Naive thymus-derived CD8-positive, alpha-beta T cell (primary cell): ENCODE measurements at regions of chr3 and their contacts with region 1.

Region 1: DNA sequence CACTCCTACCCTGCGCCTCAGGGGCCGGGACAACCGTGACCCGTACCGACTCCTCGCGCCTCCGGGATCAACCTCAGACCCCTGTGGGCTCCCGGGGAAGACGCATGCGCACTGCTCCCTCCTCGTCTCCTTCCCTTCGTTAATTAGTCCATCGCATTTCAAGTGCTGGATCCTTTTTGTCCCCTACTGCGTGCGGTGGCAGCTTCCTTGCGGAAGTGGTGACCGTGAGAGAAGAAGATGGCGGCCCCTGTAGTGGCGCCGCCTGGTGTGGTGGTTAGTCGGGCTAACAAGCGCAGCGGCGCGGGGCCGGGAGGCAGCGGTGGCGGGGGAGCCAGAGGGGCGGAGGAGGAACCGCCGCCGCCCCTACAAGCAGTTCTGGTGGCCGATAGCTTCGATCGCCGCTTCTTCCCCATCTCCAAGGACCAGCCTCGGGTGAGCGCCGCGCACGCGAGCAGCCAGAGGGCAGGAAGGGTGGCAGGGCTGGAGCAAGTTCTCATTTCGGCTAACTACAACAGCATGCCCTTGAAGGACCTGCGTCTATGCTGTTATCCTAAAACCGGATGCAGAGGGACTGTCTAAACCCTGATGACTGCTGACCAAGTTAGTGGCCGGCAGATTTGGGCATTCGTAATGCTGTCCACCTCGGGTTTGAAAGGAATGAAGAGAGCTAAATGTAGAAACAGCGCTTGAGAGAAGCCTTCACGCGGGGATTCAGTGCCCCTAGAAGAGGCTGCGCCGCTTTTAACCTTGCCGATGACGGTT is at the start of gene EIF2B5:
- DNase-seq: peak; percentile 67 to 91 (median 84)
- ATAC-seq: peak; percentile 90 to 92
- H3K4me3 Mint-ChIP-seq: peak within 1 kb of the TSS; percentile 88 to 100 (median 96)
- H3K27ac Mint-ChIP-seq: peak within 1 kb of the TSS; percentile 91 to 99 (median 97)
- H3K4me1 Mint-ChIP-seq: peaks cover 26 to 49% (median 32%) of the 10 kb centered on the region in 4 donors
- H3K27me3 Mint-ChIP-seq: no peaks in the 10 kb centered on the region
- polyA plus RNA-seq, gene EIF2B5: 45.8 to 66.6 (median 54.5) TPM

Region 2: GRCh38 chr3:184154885-184155643 is 19.7 kb after region 1 on chr3 and contains the start of gene DVL3:
- POLR2A ChIA-PET with region 1: interaction called, 18 read pairs
- DNase-seq: peak in 7 of 10 donors; percentile 16 to 43 (median 31)
- ATAC-seq: peak; percentile 60 to 75
- H3K4me3 Mint-ChIP-seq: peak within 1 kb of the TSS; percentile 84 to 99 (median 96)
- H3K27ac Mint-ChIP-seq: peak within 1 kb of the TSS; percentile 67 to 95 (median 88)
- H3K4me1 Mint-ChIP-seq: peaks cover 15 to 35% (median 32%) of the 10 kb centered on the region in 4 donors
- H3K27me3 Mint-ChIP-seq: no peaks in the 10 kb centered on the region
- polyA plus RNA-seq, gene DVL3: 3.0 to 10.8 (median 9.1) TPM

Region 3: DNA sequence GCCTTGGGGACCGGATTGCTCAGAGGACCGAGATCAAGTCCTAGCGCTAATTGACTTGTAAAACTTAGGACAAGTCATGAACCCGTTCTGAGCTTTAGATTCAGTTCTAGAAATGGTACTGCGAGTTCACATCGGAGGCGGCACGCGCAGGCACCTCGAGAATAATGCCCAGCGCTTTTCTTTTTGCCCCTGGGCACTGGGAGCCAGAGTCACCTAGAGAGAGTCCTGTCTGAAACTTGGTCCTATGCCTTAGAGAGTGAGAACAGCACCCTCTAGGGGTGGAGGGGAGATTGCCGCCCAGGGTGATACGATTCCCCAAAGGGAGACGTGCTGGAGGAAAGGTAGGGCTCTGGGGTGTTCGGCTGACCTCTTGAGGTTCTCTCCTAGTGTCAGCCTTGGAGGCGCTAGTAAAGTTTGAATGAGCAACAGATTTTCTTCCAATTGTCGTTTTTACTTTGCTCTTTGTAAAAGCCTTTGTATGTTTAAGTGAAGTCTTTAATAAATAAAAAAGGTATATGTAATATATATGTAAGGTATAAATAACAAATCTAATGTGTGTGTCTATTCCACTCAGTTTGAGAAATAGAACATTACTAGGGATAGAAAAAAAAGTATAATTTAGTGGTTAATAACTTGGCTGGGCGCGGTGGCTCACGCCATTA is 115.0 kb after region 1 on chr3:
- POLR2A ChIA-PET with region 1: interaction called, 17 read pairs
- DNase-seq: peak; percentile 71 to 92 (median 85)
- ATAC-seq: peak; percentile 65 to 67
- H3K4me3 Mint-ChIP-seq: peak overlapping the region; percentile 94 to 100 (median 96)
- H3K27ac Mint-ChIP-seq: peak overlapping the region; percentile 36 to 98 (median 94)
- H3K4me1 Mint-ChIP-seq: peaks cover 15 to 26% (median 19%) of the 10 kb centered on the region in 4 donors
- H3K27me3 Mint-ChIP-seq: no peaks in the 10 kb centered on the region

Region 4: GRCh38 chr3:184314363-184314699 is 179.0 kb after region 1 on chr3 and contains the start of gene EIF4G1:
- POLR2A ChIA-PET with region 1: no interaction called
- DNase-seq: peak; percentile 86 to 95 (median 92)
- ATAC-seq: peak; percentile 81 to 86
- H3K4me3 Mint-ChIP-seq: peak within 1 kb of the TSS; percentile 78 to 93 (median 86)
- H3K27ac Mint-ChIP-seq: peak within 1 kb of the TSS in 9 of 10 donors; percentile 63 to 96 (median 93)
- H3K4me1 Mint-ChIP-seq: peaks cover 20 to 35% (median 32%) of the 10 kb centered on the region in 4 donors
- H3K27me3 Mint-ChIP-seq: no peaks in the 10 kb centered on the region
- polyA plus RNA-seq, gene EIF4G1: 13.6 to 44.6 (median 21.1) TPM